Activated CD4-positive, alpha-beta memory T cell treated with anti-CD3 and anti-CD28 coated beads, Interleukin-2, amount 10 ng/mL, durations not matched to agents 7 days and 5 days (primary cell): ENCODE measurements at regions of chr22 and their contacts with region 1.

Region 1: GRCh38 chr22:36856121-36856791 is 4.5 kb upstream of the NCF4 start:
- DNase-seq: peak; percentile 94
- H3K4me3 Mint-ChIP-seq: peak overlapping the region; percentile 44
- H3K27ac Mint-ChIP-seq: peak overlapping the region; percentile 55
- H3K4me1 Mint-ChIP-seq: peaks cover 62% of the 10 kb centered on the region
- H3K27me3 Mint-ChIP-seq: no peaks in the 10 kb centered on the region

Region 2: DNA sequence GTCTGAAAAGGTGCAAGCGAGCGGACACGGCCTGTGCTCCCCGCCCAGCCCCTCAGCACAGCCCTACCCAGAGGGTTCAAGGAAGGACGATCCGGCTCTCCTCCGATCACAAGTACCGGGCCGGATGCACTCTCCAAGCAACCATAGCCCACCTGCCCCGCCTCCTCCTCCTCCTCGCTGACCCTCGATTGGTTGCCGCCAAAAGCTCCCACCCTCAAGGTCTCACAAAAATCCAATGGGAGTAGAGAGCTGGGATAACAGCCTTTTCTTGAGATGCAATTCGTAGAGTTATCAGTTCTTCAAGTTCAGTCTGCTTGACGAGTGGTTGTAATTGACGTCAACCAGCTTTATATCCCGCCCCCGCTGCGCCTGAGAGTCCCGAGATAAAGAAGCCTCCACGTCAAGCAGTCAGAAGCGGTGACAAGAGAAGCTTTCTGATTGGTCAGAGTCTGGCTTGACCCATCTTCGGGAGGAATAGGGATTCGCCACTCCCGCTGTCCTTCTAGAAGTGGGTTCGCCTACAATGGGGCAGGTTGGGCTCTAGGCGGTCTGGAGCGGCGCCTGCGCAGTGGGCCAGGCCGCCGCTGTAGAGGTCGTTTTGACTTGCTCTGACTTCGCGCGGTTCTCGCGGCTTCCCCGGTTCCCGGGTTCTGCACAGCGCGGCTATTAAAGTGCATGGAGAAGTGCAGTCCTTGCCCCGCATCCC is 80.1 kb before region 1 on chr22 and contains the start of gene IFT27:
- CTCF ChIA-PET with region 1: interaction called, 48 read pairs
- POLR2A ChIA-PET with region 1: interaction called, 16 read pairs
- DNase-seq: peak; percentile 98
- H3K4me3 Mint-ChIP-seq: peak within 1 kb of the TSS; percentile 85
- H3K27ac Mint-ChIP-seq: peak within 1 kb of the TSS; percentile 77
- H3K4me1 Mint-ChIP-seq: peaks cover 34% of the 10 kb centered on the region
- H3K27me3 Mint-ChIP-seq: no peaks in the 10 kb centered on the region
- total RNA-seq, gene IFT27: 28.3 to 29.5 TPM

Region 3: DNA sequence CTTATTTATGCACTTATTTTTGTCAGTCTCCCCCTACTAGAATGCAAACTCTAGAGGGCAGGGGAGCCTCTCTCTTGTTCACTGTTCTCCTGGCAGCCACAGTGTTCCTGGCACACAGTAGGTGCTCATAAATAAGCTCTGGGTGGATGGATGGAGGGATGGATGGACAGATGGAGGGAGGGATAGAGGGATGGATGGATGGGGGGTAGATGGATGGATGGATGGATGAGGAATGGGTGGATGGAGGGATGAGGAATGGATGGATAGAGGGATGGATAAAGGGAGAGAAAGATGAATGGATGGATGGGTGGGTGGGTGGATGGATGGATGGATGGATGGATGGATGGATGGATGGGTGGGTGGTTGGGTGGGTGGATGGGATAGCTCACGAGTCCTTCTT is 52.9 kb before region 1 on chr22:
- CTCF ChIA-PET with region 1: interaction called, 10 read pairs
- POLR2A ChIA-PET with region 1: no interaction called
- DNase-seq: no peak
- H3K4me3 Mint-ChIP-seq: no peak overlapping the region
- H3K27ac Mint-ChIP-seq: no peak overlapping the region
- H3K4me1 Mint-ChIP-seq: no peaks in the 10 kb centered on the region
- H3K27me3 Mint-ChIP-seq: peaks cover 13% of the 10 kb centered on the region

Region 4: GRCh38 chr22:36833073-36833472 is 23.2 kb before region 1 on chr22:
- CTCF ChIA-PET with region 1: no interaction called
- POLR2A ChIA-PET with region 1: no interaction called
- DNase-seq: no peak
- H3K4me3 Mint-ChIP-seq: no peak overlapping the region
- H3K27ac Mint-ChIP-seq: no peak overlapping the region
- H3K4me1 Mint-ChIP-seq: peaks cover 12% of the 10 kb centered on the region
- H3K27me3 Mint-ChIP-seq: peaks cover 31% of the 10 kb centered on the region

Region 5: DNA sequence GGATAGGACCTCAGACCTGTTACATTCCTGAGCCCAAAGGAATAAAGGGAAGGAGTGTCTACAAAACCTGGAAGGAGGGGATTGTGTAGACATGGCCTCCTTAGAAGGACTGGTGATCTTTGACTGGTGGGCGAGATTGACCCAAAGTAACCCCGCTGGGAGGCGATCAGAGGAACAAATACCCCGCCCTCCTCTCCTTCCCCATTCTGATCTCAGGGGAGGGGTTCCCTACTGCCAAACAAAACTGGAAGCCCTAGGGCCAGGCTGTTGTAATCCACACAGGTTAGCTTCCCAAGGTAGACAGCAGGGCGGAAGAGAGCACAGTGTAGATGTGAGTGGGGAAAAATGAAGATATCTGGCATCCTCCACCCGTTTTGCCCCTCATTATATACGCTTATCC is 29.2 kb after region 1 on chr22:
- CTCF ChIA-PET with region 1: interaction called, 11 read pairs
- POLR2A ChIA-PET with region 1: interaction called, 11 read pairs
- DNase-seq: no peak
- H3K4me3 Mint-ChIP-seq: no peak overlapping the region
- H3K27ac Mint-ChIP-seq: no peak overlapping the region
- H3K4me1 Mint-ChIP-seq: peaks cover 22% of the 10 kb centered on the region
- H3K27me3 Mint-ChIP-seq: peaks cover 2% of the 10 kb centered on the region

Region 6: GRCh38 chr22:36966851-36967540 is 110.7 kb after region 1 on chr22:
- CTCF ChIA-PET with region 1: interaction called, 12 read pairs
- POLR2A ChIA-PET with region 1: no interaction called
- DNase-seq: no peak
- H3K4me3 Mint-ChIP-seq: no peak overlapping the region
- H3K27ac Mint-ChIP-seq: no peak overlapping the region
- H3K4me1 Mint-ChIP-seq: no peaks in the 10 kb centered on the region
- H3K27me3 Mint-ChIP-seq: peaks cover 11% of the 10 kb centered on the region